WTC11 (cell line): ENCODE measurements at regions of chr10 and their contacts with region 1.

Region 1: GRCh38 chr10:72048450-72049124 is 39.8 kb downstream of the SPOCK2 start:
- DNase-seq: peak; percentile 98
- ATAC-seq: peak; percentile 87
- H3K4me3 Mint-ChIP-seq: no peak overlapping the region
- H3K27ac Mint-ChIP-seq: no peak overlapping the region
- H3K4me1 Mint-ChIP-seq: peaks cover 7% of the 10 kb centered on the region
- H3K27me3 Mint-ChIP-seq: peaks cover 3% of the 10 kb centered on the region; the same call in 1 of the 2 replicates
- CTCF ChIP-seq: peak; percentile 99

Region 2: GRCh38 chr10:70786799-70787415 is 1261.7 kb before region 1 on chr10:
- CTCF ChIA-PET with region 1: no interaction called
- POLR2A ChIA-PET with region 1: no interaction called
- DNase-seq: no peak
- ATAC-seq: no peak
- H3K4me3 Mint-ChIP-seq: no peak overlapping the region
- H3K27ac Mint-ChIP-seq: no peak overlapping the region
- H3K4me1 Mint-ChIP-seq: no peaks in the 10 kb centered on the region
- H3K27me3 Mint-ChIP-seq: no peaks in the 10 kb centered on the region
- CTCF ChIP-seq: no peak

Region 3: DNA sequence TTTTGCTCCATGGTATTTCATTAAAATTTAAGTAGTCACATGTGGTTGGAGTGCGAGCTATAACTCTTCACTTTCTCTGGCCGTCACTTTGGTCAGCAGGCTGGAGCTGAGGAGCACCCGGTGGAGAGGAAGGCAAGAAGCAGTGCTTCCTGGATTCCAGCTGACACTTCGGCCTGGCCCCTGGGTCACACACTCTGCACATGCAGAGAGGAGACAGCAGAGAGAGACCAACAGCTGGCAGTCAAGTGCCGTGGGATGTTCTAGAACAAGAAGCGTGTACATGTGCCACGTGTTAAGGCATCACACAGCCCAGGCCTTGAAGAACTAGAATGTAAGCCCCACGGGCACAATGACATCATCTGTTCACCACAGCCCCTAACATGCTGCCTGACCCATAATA is 227.6 kb before region 1 on chr10:
- CTCF ChIA-PET with region 1: no interaction called
- POLR2A ChIA-PET with region 1: no interaction called
- DNase-seq: no peak
- ATAC-seq: no peak
- H3K4me3 Mint-ChIP-seq: no peak overlapping the region
- H3K27ac Mint-ChIP-seq: no peak overlapping the region
- H3K4me1 Mint-ChIP-seq: peaks cover 27% of the 10 kb centered on the region
- H3K27me3 Mint-ChIP-seq: no peaks in the 10 kb centered on the region
- CTCF ChIP-seq: no peak

Region 4: DNA sequence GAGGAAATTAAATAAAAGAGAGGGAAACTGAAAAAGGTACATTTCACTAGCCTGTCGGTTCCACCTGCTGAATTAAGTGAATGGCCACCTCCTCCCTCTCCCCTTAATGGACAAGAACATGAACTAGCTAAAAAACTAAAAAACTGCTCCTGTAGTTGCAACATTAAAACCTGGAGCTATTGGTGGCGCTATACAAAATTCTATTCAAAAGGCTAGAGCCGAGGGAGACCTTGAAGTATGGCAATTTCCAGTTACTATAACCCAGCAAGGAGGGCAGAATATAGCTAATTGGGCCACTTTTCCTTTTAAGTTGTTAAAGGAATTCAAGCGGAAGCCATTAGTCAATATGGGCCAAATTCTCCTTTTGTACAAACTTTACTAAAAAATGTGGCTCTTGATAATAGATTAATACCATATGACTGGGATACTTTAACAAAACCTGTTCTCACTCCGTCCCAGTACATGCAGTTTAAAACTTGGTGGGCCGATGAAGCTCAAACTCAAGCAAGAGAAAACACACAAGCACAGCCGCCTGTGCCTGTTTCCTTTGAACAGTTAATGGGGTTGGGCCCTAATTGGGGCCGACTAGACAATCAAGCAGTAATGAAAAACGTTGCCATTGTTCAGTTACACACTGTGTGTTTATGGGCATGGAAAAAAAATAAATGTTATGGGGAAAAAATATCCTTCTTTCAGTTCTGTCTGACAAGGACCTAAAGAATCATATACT is 90.9 kb before region 1 on chr10:
- CTCF ChIA-PET with region 1: interaction called, 81 read pairs
- POLR2A ChIA-PET with region 1: no interaction called
- DNase-seq: no peak
- ATAC-seq: no peak
- H3K4me3 Mint-ChIP-seq: no peak overlapping the region
- H3K27ac Mint-ChIP-seq: no peak overlapping the region
- H3K4me1 Mint-ChIP-seq: peaks cover 11% of the 10 kb centered on the region
- H3K27me3 Mint-ChIP-seq: peaks cover 17% of the 10 kb centered on the region
- CTCF ChIP-seq: no peak

Region 5: DNA sequence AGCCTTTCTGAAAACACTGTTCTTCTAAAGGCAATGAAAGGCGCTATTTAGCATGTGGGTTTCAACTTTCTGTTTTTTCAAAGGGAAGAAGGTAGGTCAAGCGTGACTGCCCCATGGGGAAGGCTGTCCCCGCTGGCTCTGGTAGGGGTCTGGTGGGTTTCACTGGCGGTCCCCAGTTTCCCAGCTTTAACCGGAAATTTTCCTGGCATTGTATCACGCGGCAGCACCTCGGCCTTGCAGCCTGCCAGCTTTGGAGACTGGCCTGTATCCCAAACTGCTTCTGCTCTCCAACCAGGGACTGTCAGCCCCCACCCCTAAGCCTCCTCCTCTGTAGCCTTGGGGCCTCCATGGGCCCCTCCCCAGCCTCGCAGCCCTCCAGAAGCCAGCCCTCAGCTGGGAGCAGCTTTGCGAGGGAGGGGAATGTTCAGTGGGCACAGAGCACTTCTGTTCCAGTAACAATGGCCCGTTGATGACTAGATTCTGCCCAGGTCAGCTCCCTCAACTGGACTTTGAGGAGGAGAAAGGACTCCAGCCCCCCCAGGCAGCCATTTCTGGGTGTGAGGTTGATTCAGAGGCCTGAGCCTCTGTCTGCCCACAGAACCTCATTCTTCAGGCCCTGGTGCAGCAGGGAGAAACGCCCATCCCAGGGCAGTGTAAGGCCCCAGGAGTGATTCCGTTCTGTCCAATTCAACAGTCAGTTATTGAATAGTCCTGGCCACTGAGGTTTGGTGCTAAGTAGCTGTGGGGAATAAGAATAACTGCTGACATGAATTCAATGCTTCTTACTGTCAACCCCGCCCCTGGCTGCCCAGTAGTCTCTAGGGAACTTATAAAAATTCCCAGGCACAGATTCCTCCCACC is 67.3 kb before region 1 on chr10:
- CTCF ChIA-PET with region 1: interaction called, 18 read pairs
- POLR2A ChIA-PET with region 1: no interaction called
- DNase-seq: no peak
- ATAC-seq: no peak
- H3K4me3 Mint-ChIP-seq: no peak overlapping the region
- H3K27ac Mint-ChIP-seq: no peak overlapping the region
- H3K4me1 Mint-ChIP-seq: peaks cover 27% of the 10 kb centered on the region
- H3K27me3 Mint-ChIP-seq: no peaks in the 10 kb centered on the region
- CTCF ChIP-seq: no peak

Region 6: GRCh38 chr10:72024596-72024995 is 24.0 kb before region 1 on chr10:
- CTCF ChIA-PET with region 1: interaction called, 10 read pairs
- POLR2A ChIA-PET with region 1: no interaction called
- DNase-seq: no peak
- ATAC-seq: no peak
- H3K4me3 Mint-ChIP-seq: no peak overlapping the region
- H3K27ac Mint-ChIP-seq: no peak overlapping the region
- H3K4me1 Mint-ChIP-seq: peaks cover 2% of the 10 kb centered on the region; the same call in 1 of the 2 replicates
- H3K27me3 Mint-ChIP-seq: no peaks in the 10 kb centered on the region
- CTCF ChIP-seq: no peak

Region 7: DNA sequence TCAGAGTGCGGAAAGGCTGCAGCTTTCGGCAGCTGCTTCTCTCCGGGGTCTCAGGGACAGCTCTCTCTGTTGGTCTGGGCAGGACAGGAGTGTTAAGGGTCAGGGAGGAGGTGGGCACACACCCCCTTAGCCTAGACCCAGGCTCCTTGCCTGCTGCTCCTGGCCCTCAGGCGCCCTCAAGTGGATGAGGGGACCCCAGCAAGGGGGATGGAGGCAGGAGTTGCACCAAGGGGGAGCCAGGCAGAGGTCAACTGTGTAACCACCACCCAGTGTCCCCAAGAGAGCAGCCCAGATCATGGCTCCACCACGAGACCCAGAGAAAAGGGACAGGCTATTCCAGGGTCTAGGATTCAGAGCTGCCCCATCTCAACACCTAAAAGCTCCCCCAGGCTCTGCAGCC is 12.9 kb after region 1 on chr10:
- CTCF ChIA-PET with region 1: interaction called, 84 read pairs
- POLR2A ChIA-PET with region 1: no interaction called
- DNase-seq: peak; percentile 59
- ATAC-seq: peak; percentile 85
- H3K4me3 Mint-ChIP-seq: no peak overlapping the region
- H3K27ac Mint-ChIP-seq: no peak overlapping the region
- H3K4me1 Mint-ChIP-seq: peaks cover 14% of the 10 kb centered on the region
- H3K27me3 Mint-ChIP-seq: no peaks in the 10 kb centered on the region
- CTCF ChIP-seq: no peak; the same call in 1 of the 2 replicates

Region 8: GRCh38 chr10:72088889-72089575 is 40.4 kb after region 1 on chr10:
- CTCF ChIA-PET with region 1: interaction called, 32 read pairs
- POLR2A ChIA-PET with region 1: no interaction called
- DNase-seq: peak; percentile 39
- ATAC-seq: peak; percentile 23
- H3K4me3 Mint-ChIP-seq: peak overlapping the region; percentile 82
- H3K27ac Mint-ChIP-seq: no peak overlapping the region
- H3K4me1 Mint-ChIP-seq: peaks cover 24% of the 10 kb centered on the region
- H3K27me3 Mint-ChIP-seq: peaks cover 55% of the 10 kb centered on the region
- CTCF ChIP-seq: no peak